PC-9 (cell line): ENCODE measurements at regions of chr1 and their contacts with region 1.

Region 1: GRCh38 chr1:84597011-84597410 is 22.8 kb upstream of the CTBS start:
- DNase-seq: no peak
- H3K4me3 ChIP-seq: no peak overlapping the region
- H3K27ac ChIP-seq: no peak overlapping the region
- H3K4me1 ChIP-seq: peaks cover 21% of the 10 kb centered on the region
- H3K27me3 ChIP-seq: no peaks in the 10 kb centered on the region
- CTCF ChIP-seq: no peak

Region 2: DNA sequence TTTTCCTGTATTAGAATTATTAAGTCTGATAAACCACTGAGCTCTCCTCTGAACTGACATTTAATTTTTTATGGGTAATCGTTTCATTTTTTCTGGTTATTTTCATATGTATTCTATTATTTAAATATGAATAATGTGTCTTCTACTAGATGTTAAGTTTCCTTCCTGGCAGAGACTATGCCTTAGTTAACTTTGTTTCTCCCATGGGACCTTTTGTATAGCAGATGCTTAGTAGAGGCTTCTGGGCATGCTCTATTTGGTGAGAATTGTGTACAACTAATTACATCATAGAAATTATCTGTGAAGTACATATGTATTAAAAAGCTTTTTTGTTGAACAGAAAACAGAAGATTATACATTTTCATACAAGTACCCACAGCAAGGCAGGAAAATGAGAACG is 46.2 kb before region 1 on chr1:
- CTCF ChIA-PET with region 1: no interaction called
- POLR2A ChIA-PET with region 1: interaction called, 55 read pairs
- intact Hi-C with region 1: no loop called
- DNase-seq: no peak
- H3K4me3 ChIP-seq: no peak overlapping the region
- H3K27ac ChIP-seq: no peak overlapping the region
- H3K4me1 ChIP-seq: no peaks in the 10 kb centered on the region
- H3K27me3 ChIP-seq: no peaks in the 10 kb centered on the region
- CTCF ChIP-seq: no peak